ENCODE measurements at regions of chrX and their contacts with region 1.

Region 1: DNA sequence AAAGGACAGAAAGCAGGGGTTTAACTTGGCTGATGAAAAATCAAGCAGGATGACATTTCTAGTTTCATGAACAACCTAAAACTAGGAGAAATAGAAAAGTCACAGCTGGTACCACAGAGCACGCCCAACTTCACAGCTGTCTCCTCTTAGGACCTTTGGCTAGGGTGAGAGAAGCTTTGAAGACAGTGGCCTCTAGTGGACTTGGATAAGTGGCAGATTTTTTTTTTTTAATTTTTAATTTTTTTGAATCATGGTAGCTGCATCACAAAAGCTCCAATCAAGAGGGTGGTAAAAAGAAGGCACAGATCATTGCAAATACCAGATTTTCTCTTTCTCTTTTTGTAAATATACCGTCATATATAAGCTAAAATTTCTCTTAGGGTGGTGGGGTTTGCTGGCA is 20.2 kb upstream of the MAP3K15 start:
- DNase-seq: peak; percentile 43
- ATAC-seq: peak; percentile 42
- H3K4me3 ChIP-seq: no peak overlapping the region
- H3K27ac ChIP-seq: no peak overlapping the region
- H3K4me1 ChIP-seq: no peaks in the 10 kb centered on the region
- H3K27me3 ChIP-seq: no peaks in the 10 kb centered on the region
- CTCF ChIP-seq: peak; percentile 55

Region 2: GRCh38 chrX:19382555-19383145 is 152.8 kb before region 1 on chrX:
- CTCF ChIA-PET with region 1: interaction called, 21 read pairs
- POLR2A ChIA-PET with region 1: interaction called, 4 read pairs
- intact Hi-C with region 1: no loop called
- DNase-seq: peak; percentile 68
- ATAC-seq: peak; percentile 92
- H3K4me3 ChIP-seq: no peak overlapping the region
- H3K27ac ChIP-seq: no peak overlapping the region
- H3K4me1 ChIP-seq: no peaks in the 10 kb centered on the region
- H3K27me3 ChIP-seq: no peaks in the 10 kb centered on the region
- CTCF ChIP-seq: peak; percentile 74

Region 3: DNA sequence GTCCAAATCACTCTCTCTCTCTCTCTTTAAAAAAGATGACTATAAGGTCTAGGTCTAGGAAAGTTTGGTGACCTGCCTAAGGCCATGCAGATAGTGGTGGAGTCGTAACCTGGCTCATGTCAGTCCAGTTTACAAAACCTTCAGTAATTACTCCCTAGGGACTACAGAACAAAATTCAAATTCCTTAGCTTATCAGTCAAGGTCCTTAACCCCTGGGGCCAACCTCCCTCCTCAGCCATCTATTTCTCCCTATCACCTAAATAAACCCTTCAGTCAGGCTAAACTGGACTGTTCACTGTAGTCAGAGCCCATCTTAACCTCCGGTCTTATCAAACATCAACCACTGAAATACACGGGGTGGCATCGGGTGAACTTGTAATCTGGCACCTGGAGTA is 89.1 kb before region 1 on chrX:
- CTCF ChIA-PET with region 1: interaction called, 12 read pairs
- POLR2A ChIA-PET with region 1: no interaction called
- intact Hi-C with region 1: no loop called
- DNase-seq: no peak
- ATAC-seq: no peak
- H3K4me3 ChIP-seq: no peak overlapping the region
- H3K27ac ChIP-seq: no peak overlapping the region
- H3K4me1 ChIP-seq: no peaks in the 10 kb centered on the region
- H3K27me3 ChIP-seq: no peaks in the 10 kb centered on the region
- CTCF ChIP-seq: no peak

Measured in PC-3 (cell line).